Esophagus muscularis mucosa (tissue), 4 donors: ENCODE measurements at regions of chr11 and their contacts with region 1.

Region 1: GRCh38 chr11:57800444-57801182 is 39.0 kb downstream of the CTNND1 start:
- DNase-seq: no peak
- H3K4me3 ChIP-seq: no peak overlapping the region
- H3K27ac ChIP-seq: peak overlapping the region; percentile 65 to 78 (median 68)
- H3K4me1 ChIP-seq: peaks cover 37 to 60% (median 51%) of the 10 kb centered on the region in 4 donors
- H3K27me3 ChIP-seq: no peaks in the 10 kb centered on the region
- CTCF ChIP-seq: peak; percentile 87 to 95 (median 88)
- EP300 ChIP-seq: no peak
- POLR2A ChIP-seq: no peak

Region 2: DNA sequence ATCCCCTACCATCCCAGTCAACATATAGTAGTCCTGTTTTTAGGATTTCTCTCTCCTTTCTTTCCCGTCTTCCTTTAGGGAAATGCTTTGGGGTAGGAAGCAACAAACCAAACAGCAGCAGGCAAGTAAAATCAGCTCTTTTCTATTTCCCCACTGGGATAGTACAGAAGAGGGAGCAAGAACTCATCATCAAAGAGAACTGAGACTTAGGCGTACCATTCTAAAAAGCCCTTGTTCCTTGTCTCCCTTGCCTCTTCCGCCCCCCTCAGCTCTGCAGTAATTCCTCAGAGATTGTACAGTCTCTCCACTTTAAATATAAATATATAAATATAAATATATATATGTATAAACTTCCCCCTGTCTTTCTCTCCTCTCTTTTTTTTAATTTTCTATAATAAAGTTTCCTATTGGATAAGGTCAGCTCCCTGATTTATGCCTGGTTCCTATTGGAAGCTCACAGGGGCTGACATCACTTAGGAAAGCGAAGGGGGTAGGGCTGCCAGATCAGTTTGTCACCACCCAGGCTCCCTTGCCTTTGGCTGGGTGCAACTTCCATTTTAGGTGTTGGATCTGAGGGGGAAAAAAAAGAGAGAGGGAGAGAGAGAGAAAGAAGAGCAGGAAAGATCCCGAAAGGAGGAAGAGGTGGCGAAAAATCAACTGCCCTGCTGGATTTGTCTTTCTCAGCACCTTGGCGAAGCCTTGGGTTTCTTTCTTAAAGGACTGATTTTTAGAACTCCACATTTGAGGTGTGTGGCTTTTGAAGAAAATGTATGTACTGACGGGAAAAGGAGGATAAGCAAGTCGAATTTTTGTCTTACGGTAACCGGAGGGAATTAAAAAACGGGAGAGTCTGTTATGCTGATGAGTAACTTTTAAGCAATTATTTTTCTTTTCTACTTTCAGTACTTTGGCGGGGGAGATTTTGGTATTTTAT is 39.0 kb before region 1 on chr11 and contains the start of gene CTNND1:
- intact Hi-C with region 1: loop called (anchors 2 kb)
- DNase-seq: peak; percentile 96
- H3K4me3 ChIP-seq: peak within 1 kb of the TSS; percentile 50 to 74 (median 72)
- H3K27ac ChIP-seq: peak within 1 kb of the TSS; percentile 88 to 92 (median 92)
- H3K4me1 ChIP-seq: peaks cover 25 to 33% (median 32%) of the 10 kb centered on the region in 4 donors
- H3K27me3 ChIP-seq: no peaks in the 10 kb centered on the region
- CTCF ChIP-seq: no peak
- EP300 ChIP-seq: no peak
- POLR2A ChIP-seq: no peak
- total RNA-seq, gene CTNND1: 78.1 to 101 (median 89.5) TPM

Region 3: GRCh38 chr11:58524232-58525036 is 723.8 kb after region 1 on chr11:
- intact Hi-C with region 1: loop called (anchors 10 kb)
- DNase-seq: no peak
- H3K4me3 ChIP-seq: peak overlapping the region in 3 of 4 donors; percentile 5 to 25 (median 13)
- H3K27ac ChIP-seq: peak overlapping the region in 2 of 4 donors; percentile 33 to 55
- H3K4me1 ChIP-seq: peaks cover 5 to 25% (median 21%) of the 10 kb centered on the region in 4 donors
- H3K27me3 ChIP-seq: no peaks in the 10 kb centered on the region
- CTCF ChIP-seq: peak; percentile 60 to 63 (median 60)
- EP300 ChIP-seq: no peak
- POLR2A ChIP-seq: no peak